MCF 10A (cell line): ENCODE measurements at regions of chr20 and their contacts with region 1.

Region 1: GRCh38 chr20:20712474-20713243 is at the start of gene RALGAPA2:
- DNase-seq: peak; percentile 97
- H3K4me3 Mint-ChIP-seq: peak within 1 kb of the TSS; percentile 87
- H3K27ac Mint-ChIP-seq: peak within 1 kb of the TSS; percentile 91
- H3K4me1 Mint-ChIP-seq: peaks cover 16% of the 10 kb centered on the region
- H3K27me3 Mint-ChIP-seq: no peaks in the 10 kb centered on the region
- CTCF ChIP-seq: no peak
- total RNA-seq, gene RALGAPA2: 9.8 and 12.1 TPM in 2 replicates

Region 2: DNA sequence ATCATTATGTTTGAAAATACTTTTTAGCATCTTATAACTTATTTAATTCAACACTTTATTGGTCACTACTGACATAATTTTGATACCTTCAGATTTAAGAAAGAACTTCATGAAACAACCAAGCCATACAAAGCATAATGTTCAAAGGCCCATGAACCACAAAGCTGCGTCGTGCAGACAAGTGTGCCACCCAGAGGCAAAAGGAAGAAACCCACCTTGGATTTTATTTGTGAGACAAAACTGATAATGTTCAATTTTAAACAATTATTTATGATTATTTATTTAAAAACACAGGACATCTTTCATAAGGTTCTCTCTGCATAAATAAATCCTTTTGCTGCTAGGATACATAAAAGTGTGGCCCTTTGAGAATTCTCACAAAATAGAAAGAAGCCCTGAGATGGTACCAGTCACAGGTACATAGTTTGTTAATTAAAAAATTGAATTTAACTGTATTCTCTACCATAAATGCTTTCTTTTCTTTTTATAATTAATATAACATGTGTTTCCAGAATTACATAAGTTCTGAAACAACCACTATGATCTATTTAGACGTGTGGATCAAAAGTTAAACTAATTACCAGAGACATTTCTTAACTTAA is 144.0 kb before region 1 on chr20:
- CTCF ChIA-PET with region 1: no interaction called
- POLR2A ChIA-PET with region 1: no interaction called
- intact Hi-C with region 1: no loop called
- DNase-seq: peak; percentile 49
- H3K4me3 Mint-ChIP-seq: no peak overlapping the region
- H3K27ac Mint-ChIP-seq: no peak overlapping the region
- H3K4me1 Mint-ChIP-seq: no peaks in the 10 kb centered on the region
- H3K27me3 Mint-ChIP-seq: no peaks in the 10 kb centered on the region
- CTCF ChIP-seq: peak; percentile 81

Region 3: DNA sequence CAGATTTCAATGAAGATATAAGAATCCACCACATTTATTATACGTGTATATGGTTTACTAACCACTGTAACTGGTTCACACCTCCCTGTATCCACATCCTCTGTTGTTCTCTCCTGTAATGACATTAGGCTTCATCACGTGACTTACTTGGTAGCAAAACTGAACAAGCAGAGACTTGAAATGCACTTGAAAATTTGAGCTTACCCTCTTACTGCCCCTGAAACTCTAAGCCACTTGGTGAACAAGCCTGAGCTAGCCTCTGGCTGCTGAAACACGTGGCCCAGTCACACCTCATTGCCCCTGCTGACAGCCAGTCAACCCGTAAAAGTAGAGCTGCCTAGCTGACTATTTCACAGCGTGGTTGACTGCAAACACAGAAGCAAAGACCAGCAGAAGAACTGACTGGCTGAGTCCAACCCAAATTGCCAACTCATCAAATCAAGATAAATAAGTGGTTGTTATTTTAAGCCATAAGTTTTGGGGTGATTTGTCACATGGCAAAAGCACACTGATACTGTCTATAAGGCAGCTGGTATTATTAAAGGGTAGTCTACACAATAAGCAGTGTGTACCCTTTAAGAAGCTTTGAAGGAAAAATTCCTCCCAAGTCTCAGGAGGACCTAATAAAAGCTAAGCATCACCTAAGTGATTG is 109.2 kb before region 1 on chr20:
- CTCF ChIA-PET with region 1: no interaction called
- POLR2A ChIA-PET with region 1: interaction called, 10 read pairs
- intact Hi-C with region 1: no loop called
- DNase-seq: peak; percentile 88
- H3K4me3 Mint-ChIP-seq: no peak overlapping the region
- H3K27ac Mint-ChIP-seq: peak overlapping the region; percentile 50
- H3K4me1 Mint-ChIP-seq: peaks cover 14% of the 10 kb centered on the region
- H3K27me3 Mint-ChIP-seq: no peaks in the 10 kb centered on the region
- CTCF ChIP-seq: no peak

Region 4: DNA sequence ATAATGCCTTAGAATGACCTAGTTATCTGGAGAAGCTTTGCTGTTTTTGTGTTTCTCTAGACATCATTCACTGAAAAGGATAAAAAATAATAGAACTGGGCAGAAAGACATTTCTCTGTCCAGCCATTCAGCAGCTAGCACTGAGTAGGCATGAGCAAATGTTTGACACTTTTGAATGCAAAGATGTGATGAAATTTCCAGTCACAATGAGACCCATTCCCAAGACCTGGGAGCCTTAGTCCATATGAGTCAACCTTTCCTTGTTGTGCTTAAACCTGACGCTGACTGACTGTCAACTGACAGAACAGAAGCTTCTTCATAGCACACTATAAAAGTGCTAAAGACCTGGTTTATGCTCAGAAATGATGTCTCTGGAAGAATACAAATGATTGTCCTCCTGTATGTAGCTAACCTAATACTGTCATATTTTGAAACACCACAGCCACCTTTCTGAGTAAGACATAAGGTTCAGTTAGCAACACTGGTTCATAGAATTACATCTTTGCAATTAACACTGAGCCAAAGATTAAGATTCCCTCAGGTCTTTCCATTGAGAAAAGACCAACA is 17.3 kb before region 1 on chr20:
- CTCF ChIA-PET with region 1: interaction called, 4 read pairs
- POLR2A ChIA-PET with region 1: interaction called, 6 read pairs
- intact Hi-C with region 1: loop called (anchors 2 kb)
- DNase-seq: peak; percentile 82
- H3K4me3 Mint-ChIP-seq: no peak overlapping the region
- H3K27ac Mint-ChIP-seq: no peak overlapping the region
- H3K4me1 Mint-ChIP-seq: peaks cover 30% of the 10 kb centered on the region
- H3K27me3 Mint-ChIP-seq: no peaks in the 10 kb centered on the region
- CTCF ChIP-seq: no peak

Region 5: GRCh38 chr20:20734475-20734948 is 21.9 kb after region 1 on chr20:
- CTCF ChIA-PET with region 1: interaction called, 8 read pairs
- POLR2A ChIA-PET with region 1: interaction called, 23 read pairs
- intact Hi-C with region 1: no loop called
- DNase-seq: no peak
- H3K4me3 Mint-ChIP-seq: no peak overlapping the region
- H3K27ac Mint-ChIP-seq: no peak overlapping the region
- H3K4me1 Mint-ChIP-seq: peaks cover 20% of the 10 kb centered on the region
- H3K27me3 Mint-ChIP-seq: no peaks in the 10 kb centered on the region
- CTCF ChIP-seq: no peak

Region 6: DNA sequence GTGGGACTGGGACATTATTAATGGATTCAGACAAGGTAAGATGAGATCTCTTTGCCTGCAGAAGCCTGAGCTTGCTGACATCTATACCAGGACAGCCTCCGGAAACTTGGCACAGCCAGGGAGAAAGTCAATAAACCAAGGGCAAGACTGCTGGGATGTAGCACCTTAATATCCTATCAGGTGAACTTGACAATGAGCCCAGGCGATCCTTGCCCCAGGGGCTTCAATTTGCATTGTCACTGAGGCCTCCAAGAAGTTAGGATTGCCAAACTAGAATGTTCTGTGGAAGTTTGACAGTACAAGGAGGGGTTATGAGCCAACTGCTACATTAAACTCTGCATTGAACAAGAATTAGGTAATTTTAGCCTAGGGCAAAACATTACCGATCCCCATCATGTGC is 59.9 kb after region 1 on chr20:
- CTCF ChIA-PET with region 1: interaction called, 4 read pairs
- POLR2A ChIA-PET with region 1: interaction called, 14 read pairs
- intact Hi-C with region 1: no loop called
- DNase-seq: peak; percentile 94
- H3K4me3 Mint-ChIP-seq: no peak overlapping the region
- H3K27ac Mint-ChIP-seq: no peak overlapping the region
- H3K4me1 Mint-ChIP-seq: peaks cover 27% of the 10 kb centered on the region
- H3K27me3 Mint-ChIP-seq: no peaks in the 10 kb centered on the region
- CTCF ChIP-seq: no peak

Region 7: DNA sequence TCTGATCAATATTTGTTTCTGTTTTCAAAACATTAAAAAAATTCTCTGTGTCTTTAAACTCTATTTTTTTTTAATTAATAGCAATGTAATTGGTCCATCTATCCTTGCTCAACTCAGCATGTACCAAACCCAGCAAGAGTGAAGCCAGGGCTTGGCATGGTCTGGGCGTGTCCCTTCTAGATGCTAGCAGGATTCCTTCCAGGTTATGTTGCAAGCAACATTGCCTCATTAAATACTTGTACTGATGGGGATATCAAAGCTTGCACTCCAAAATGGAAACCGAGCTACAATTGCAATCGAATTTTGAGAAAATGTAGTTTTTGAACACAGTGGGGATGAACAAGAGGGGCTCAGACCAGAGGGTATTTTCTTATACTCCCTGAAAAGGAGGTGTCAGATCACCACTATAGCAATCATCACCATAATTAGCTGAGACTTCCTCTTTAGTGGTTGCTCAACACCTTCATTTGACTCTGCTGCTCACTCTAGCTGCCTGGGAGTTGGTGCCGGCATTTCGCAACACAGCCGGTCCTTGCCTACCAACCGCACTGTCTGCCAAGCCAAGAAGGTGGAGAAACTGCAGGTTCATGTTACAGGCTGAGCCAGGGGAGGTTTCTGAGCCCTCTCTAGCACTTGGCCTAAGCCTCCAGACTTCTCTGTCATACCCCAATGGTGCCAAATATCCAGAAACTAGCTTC is 67.6 kb after region 1 on chr20:
- CTCF ChIA-PET with region 1: interaction called, 3 read pairs
- POLR2A ChIA-PET with region 1: interaction called, 38 read pairs
- intact Hi-C with region 1: loop called (anchors 1 kb)
- DNase-seq: peak; percentile 98
- H3K4me3 Mint-ChIP-seq: peak overlapping the region; percentile 59
- H3K27ac Mint-ChIP-seq: peak overlapping the region; percentile 57
- H3K4me1 Mint-ChIP-seq: peaks cover 19% of the 10 kb centered on the region
- H3K27me3 Mint-ChIP-seq: no peaks in the 10 kb centered on the region
- CTCF ChIP-seq: no peak